Panc1 (cell line): ENCODE measurements at regions of chr19 and their contacts with region 1.

Region 1: GRCh38 chr19:8536282-8536681 is 22.3 kb upstream of the ZNF414 start:
- DNase-seq: no peak
- ATAC-seq: no peak
- H3K4me3 ChIP-seq: no peak overlapping the region
- H3K27ac ChIP-seq: no peak overlapping the region
- H3K4me1 ChIP-seq: no peaks in the 10 kb centered on the region
- H3K27me3 ChIP-seq: no peaks in the 10 kb centered on the region
- CTCF ChIP-seq: no peak

Region 2: GRCh38 chr19:8494158-8494557 is 42.1 kb before region 1 on chr19:
- CTCF ChIA-PET with region 1: no interaction called
- POLR2A ChIA-PET with region 1: no interaction called
- in situ Hi-C with region 1: no loop called
- intact Hi-C with region 1: no loop called
- DNase-seq: no peak
- ATAC-seq: no peak
- H3K4me3 ChIP-seq: no peak overlapping the region
- H3K27ac ChIP-seq: no peak overlapping the region
- H3K4me1 ChIP-seq: no peaks in the 10 kb centered on the region
- H3K27me3 ChIP-seq: no peaks in the 10 kb centered on the region
- CTCF ChIP-seq: no peak

Region 3: DNA sequence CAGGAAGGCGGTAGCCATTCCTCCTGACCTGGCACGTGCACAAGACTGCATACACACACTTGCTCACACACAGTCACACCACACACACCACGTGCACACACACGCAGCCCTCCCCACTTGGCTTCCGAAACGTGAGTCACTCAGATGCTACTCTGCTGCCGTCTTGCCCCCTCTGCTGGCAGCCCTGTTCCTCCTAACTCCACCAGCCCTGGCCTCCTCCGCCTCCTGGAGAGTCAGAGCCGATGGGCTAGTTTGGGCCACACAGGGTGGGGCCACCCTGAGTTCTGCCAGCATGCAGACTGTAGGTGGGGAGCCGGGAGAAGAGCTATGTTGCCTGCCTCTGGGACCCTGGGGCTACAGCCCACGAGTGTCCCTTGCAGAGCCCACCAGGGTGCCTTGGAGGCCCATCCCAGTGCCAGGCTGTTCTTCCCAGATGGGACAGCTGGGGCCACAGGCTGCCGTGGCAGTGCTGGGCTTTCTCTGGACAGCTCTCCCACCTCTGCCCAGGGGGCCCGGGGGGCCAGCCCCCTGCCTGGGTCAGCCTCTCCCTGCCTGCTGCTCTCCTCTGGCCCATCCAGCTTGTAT is 1310.9 kb after region 1 on chr19:
- CTCF ChIA-PET with region 1: no interaction called
- POLR2A ChIA-PET with region 1: interaction called, 12 read pairs
- in situ Hi-C with region 1: no loop called
- intact Hi-C with region 1: no loop called
- DNase-seq: peak; percentile 12
- ATAC-seq: peak; percentile 84
- H3K4me3 ChIP-seq: no peak overlapping the region
- H3K27ac ChIP-seq: no peak overlapping the region
- H3K4me1 ChIP-seq: no peaks in the 10 kb centered on the region
- H3K27me3 ChIP-seq: no peaks in the 10 kb centered on the region
- CTCF ChIP-seq: peak; percentile 75